B cell (primary cell): ENCODE measurements at regions of chr9 and their contacts with region 1.

Region 1: DNA sequence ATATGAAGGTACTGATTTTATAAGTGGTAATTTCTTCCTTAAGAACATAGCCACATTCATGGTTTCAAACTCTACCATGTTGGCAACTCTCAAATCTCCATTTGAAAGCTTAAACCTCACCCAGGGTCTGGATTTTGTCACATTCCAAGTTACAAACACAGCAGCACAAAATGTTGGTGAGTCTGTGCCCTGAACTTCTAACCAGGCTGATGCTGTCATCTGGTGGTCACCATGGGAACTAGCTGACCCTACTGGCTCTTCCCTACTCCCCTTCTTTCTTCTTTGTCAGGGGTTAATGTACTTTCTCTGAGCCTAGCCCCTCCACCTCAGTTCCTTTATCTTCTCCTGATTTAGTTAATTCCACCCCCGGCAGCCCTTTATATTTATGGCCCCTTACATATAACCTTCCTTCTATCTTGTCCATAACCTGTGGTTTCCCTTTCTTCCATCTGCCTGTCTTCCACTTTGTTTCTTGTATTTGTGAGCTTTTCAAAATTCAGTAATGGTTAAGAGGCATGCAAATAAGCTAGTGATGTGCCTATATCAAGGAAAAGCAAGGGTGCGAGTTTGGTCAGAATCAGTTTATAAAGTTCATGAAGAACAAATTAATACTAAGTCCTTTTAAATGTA is 35.9 kb downstream of the TGFBR1 start:
- DNase-seq: peak; percentile 75
- ATAC-seq: peak; percentile 88
- H3K4me3 ChIP-seq: no peak overlapping the region
- H3K4me3 Mint-ChIP-seq: no peak overlapping the region
- H3K27ac ChIP-seq: no peak overlapping the region
- H3K27ac Mint-ChIP-seq: peak overlapping the region; percentile 46
- H3K4me1 ChIP-seq: peaks cover 15 to 16% of the 10 kb centered on the region in 2 donors
- H3K4me1 Mint-ChIP-seq: peaks cover 27% of the 10 kb centered on the region
- H3K27me3 ChIP-seq: no peaks in the 10 kb centered on the region
- H3K27me3 Mint-ChIP-seq: no peaks in the 10 kb centered on the region
- CTCF ChIP-seq: peak; percentile 99

Region 2: GRCh38 chr9:98974994-98975712 is 165.6 kb before region 1 on chr9:
- CTCF ChIA-PET with region 1: interaction called, 159 read pairs
- POLR2A ChIA-PET with region 1: no interaction called
- intact Hi-C with region 1: loop called (anchors 1 kb)
- DNase-seq: peak; percentile 82
- ATAC-seq: peak; percentile 99
- H3K4me3 ChIP-seq: peak overlapping the region in 4 of 5 experiments; percentile 3 to 47 (median 24)
- H3K4me3 Mint-ChIP-seq: peak overlapping the region; percentile 52
- H3K27ac ChIP-seq: no peak overlapping the region
- H3K27ac Mint-ChIP-seq: no peak overlapping the region
- H3K4me1 ChIP-seq: peaks cover 4 to 10% of the 10 kb centered on the region in 2 donors
- H3K4me1 Mint-ChIP-seq: peaks cover 6% of the 10 kb centered on the region
- H3K27me3 ChIP-seq: peaks cover 0 to 21% (median 10%) of the 10 kb centered on the region in 4 experiments
- H3K27me3 Mint-ChIP-seq: peaks cover 20% of the 10 kb centered on the region
- CTCF ChIP-seq: peak; percentile 97

Region 3: DNA sequence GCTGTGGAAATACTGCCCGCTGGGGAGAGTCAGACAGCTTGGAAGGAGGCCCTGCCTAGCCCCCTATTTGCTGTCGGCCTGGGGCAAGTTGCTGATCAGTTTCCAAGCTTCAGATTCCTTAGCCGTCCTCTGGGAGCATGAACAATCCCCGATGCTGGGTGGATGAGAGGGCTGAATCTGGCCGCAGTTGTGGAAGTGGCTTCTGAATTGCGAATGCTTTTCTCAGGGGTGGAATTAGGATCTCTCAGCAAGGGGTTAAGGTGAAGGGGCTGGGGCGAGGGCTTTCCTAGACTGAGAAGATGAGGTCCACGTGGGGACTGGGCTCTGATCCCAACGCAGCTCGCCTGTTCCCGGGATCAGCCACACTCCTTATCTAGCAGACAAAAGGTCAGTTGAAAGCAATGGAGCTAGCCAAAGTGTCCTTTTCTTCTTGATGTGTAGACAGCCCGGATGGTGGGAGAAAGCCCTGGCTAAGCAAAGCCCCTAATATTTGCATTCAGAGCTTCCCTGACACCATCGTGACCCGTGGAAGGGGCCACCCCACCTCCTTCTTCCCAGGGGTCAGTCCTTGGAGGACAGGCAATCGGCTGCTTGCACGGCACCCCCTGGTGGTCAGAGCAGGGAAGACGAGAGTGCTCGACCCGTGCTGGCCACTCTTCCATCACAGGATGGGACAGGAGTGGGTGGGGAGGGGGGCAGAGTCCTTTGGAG is 142.2 kb before region 1 on chr9:
- CTCF ChIA-PET with region 1: interaction called, 439 read pairs
- POLR2A ChIA-PET with region 1: interaction called, 4 read pairs
- intact Hi-C with region 1: loop called (anchors 1 kb)
- DNase-seq: peak; percentile 61
- ATAC-seq: peak; percentile 62
- H3K4me3 ChIP-seq: no peak overlapping the region
- H3K4me3 Mint-ChIP-seq: no peak overlapping the region
- H3K27ac ChIP-seq: no peak overlapping the region
- H3K27ac Mint-ChIP-seq: no peak overlapping the region
- H3K4me1 ChIP-seq: peaks cover 2 to 15% of the 10 kb centered on the region in 2 donors
- H3K4me1 Mint-ChIP-seq: peaks cover 14% of the 10 kb centered on the region
- H3K27me3 ChIP-seq: peaks cover 0 to 9% (median 0%) of the 10 kb centered on the region in 4 experiments
- H3K27me3 Mint-ChIP-seq: no peaks in the 10 kb centered on the region
- CTCF ChIP-seq: peak; percentile 81

Region 4: GRCh38 chr9:99057665-99058625 is 82.9 kb before region 1 on chr9:
- CTCF ChIA-PET with region 1: interaction called, 11 read pairs
- POLR2A ChIA-PET with region 1: no interaction called
- intact Hi-C with region 1: no loop called
- DNase-seq: peak; percentile 72
- ATAC-seq: peak; percentile 52
- H3K4me3 ChIP-seq: peak overlapping the region; percentile 13 to 55 (median 23)
- H3K4me3 Mint-ChIP-seq: peak overlapping the region; percentile 86
- H3K27ac ChIP-seq: peak overlapping the region; percentile 57 to 75
- H3K27ac Mint-ChIP-seq: peak overlapping the region; percentile 88
- H3K4me1 ChIP-seq: peaks cover 54 to 66% of the 10 kb centered on the region in 2 donors
- H3K4me1 Mint-ChIP-seq: peaks cover 64% of the 10 kb centered on the region
- H3K27me3 ChIP-seq: no peaks in the 10 kb centered on the region
- H3K27me3 Mint-ChIP-seq: no peaks in the 10 kb centered on the region
- CTCF ChIP-seq: no peak

Region 5: GRCh38 chr9:99118782-99119466 is 21.9 kb before region 1 on chr9:
- CTCF ChIA-PET with region 1: interaction called, 13 read pairs
- POLR2A ChIA-PET with region 1: no interaction called
- intact Hi-C with region 1: loop called (anchors 2 kb)
- DNase-seq: peak; percentile 73
- ATAC-seq: peak; percentile 91
- H3K4me3 ChIP-seq: peak overlapping the region; percentile 3 to 57 (median 45)
- H3K4me3 Mint-ChIP-seq: peak overlapping the region; percentile 59
- H3K27ac ChIP-seq: peak overlapping the region; percentile 21 to 73
- H3K27ac Mint-ChIP-seq: peak overlapping the region; percentile 88
- H3K4me1 ChIP-seq: peaks cover 36 to 43% of the 10 kb centered on the region in 2 donors
- H3K4me1 Mint-ChIP-seq: peaks cover 71% of the 10 kb centered on the region
- H3K27me3 ChIP-seq: no peaks in the 10 kb centered on the region
- H3K27me3 Mint-ChIP-seq: no peaks in the 10 kb centered on the region
- CTCF ChIP-seq: no peak